ENCODE measurements at regions of chr11 and their contacts with region 1.

Region 1: GRCh38 chr11:4072668-4073285 is 21.8 kb upstream of the RRM1 start:
- DNase-seq: peak; percentile 62
- ATAC-seq: peak; percentile 75
- H3K4me3 Mint-ChIP-seq: no peak overlapping the region
- H3K27ac Mint-ChIP-seq: no peak overlapping the region
- H3K4me1 Mint-ChIP-seq: peaks cover 48% of the 10 kb centered on the region
- H3K27me3 Mint-ChIP-seq: no peaks in the 10 kb centered on the region

Region 2: GRCh38 chr11:3057069-3057963 is 1015.5 kb before region 1 on chr11 and contains the start of gene CARS1:
- CTCF ChIA-PET with region 1: no interaction called
- POLR2A ChIA-PET with region 1: no interaction called
- intact Hi-C with region 1: no loop called
- DNase-seq: peak; percentile 98
- ATAC-seq: peak; percentile 99
- H3K4me3 Mint-ChIP-seq: peak within 1 kb of the TSS; percentile 89
- H3K27ac Mint-ChIP-seq: peak within 1 kb of the TSS; percentile 87
- H3K4me1 Mint-ChIP-seq: peaks cover 29% of the 10 kb centered on the region
- H3K27me3 Mint-ChIP-seq: no peaks in the 10 kb centered on the region
- total RNA-seq, gene CARS1: 94.1 to 126 TPM

Region 3: GRCh38 chr11:3817181-3817800 is 255.5 kb before region 1 on chr11:
- CTCF ChIA-PET with region 1: interaction called, 17 read pairs
- POLR2A ChIA-PET with region 1: no interaction called
- intact Hi-C with region 1: no loop called
- DNase-seq: no peak
- ATAC-seq: no peak
- H3K4me3 Mint-ChIP-seq: no peak overlapping the region
- H3K27ac Mint-ChIP-seq: no peak overlapping the region
- H3K4me1 Mint-ChIP-seq: no peaks in the 10 kb centered on the region
- H3K27me3 Mint-ChIP-seq: no peaks in the 10 kb centered on the region

Region 4: DNA sequence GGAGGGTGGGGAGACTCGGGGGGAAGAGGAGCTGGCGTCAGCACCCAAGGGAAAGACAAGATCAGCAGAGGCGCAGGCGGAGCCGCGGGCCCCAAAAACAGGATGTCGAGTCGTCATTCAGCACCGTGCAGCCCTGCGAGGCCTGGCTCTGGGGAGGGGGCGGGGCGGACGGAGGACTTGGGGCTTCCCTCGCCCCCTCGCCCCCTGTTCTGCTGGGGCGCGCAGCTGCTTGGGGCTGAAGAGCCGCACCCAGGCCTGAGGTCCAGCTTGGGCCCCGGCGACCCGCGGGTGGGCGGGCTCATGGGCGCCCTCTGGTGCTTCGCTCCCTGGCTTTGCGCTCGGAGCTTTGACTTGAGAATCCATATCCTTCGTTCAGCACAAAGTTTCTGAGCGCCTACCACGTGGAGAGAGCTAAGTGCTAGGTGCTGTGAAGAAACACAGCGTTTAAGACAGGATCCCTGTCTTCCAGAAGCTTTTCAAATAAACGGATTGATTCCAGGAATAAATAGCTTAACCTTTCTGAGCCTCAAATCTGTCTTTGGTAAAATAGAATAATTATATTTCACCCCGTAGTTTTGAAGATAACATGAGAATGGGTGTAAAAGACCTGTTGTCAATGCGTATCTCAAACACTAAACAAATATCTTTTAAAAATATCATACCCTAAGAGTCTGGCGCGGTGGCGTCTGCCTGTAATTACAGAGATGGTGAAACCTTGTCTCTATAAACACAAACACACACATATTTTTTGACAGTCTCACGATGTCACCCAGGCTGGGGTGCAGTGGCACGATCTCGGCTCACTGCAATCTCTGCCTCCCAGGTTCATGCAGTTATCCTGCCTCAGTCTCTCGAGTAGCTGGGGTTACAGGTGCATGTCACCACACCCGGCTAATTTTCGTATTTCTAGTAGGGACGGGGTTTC is 231.1 kb before region 1 on chr11:
- CTCF ChIA-PET with region 1: interaction called, 299 read pairs
- POLR2A ChIA-PET with region 1: interaction called, 13 read pairs
- intact Hi-C with region 1: no loop called
- DNase-seq: peak; percentile 97
- ATAC-seq: peak; percentile 30
- H3K4me3 Mint-ChIP-seq: peak overlapping the region; percentile 93
- H3K27ac Mint-ChIP-seq: peak overlapping the region; percentile 93
- H3K4me1 Mint-ChIP-seq: peaks cover 54% of the 10 kb centered on the region
- H3K27me3 Mint-ChIP-seq: no peaks in the 10 kb centered on the region

Region 5: DNA sequence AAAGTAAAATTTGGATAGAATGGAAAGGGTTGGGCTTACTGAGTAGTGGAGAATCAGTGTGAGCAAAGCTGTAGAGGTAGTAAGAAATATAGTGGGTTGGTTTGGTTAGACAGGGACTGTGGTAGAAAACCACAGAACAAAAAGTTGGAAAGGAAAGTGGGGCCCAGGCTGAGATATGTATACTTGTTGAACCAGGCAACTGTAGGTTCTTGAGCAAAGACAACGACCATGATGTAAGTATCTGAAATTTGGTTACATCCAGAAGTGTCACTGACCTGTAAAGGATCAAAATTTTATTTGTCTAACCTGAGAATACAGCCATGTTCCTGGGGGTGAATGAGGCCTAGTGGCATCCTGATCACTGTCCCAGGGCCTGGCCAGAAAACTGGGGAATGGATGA is 103.2 kb before region 1 on chr11:
- CTCF ChIA-PET with region 1: interaction called, 11 read pairs
- POLR2A ChIA-PET with region 1: no interaction called
- intact Hi-C with region 1: no loop called
- DNase-seq: peak; percentile 59
- ATAC-seq: peak; percentile 77
- H3K4me3 Mint-ChIP-seq: peak overlapping the region; percentile 26
- H3K27ac Mint-ChIP-seq: peak overlapping the region; percentile 92
- H3K4me1 Mint-ChIP-seq: peaks cover 77% of the 10 kb centered on the region
- H3K27me3 Mint-ChIP-seq: no peaks in the 10 kb centered on the region

Region 6: DNA sequence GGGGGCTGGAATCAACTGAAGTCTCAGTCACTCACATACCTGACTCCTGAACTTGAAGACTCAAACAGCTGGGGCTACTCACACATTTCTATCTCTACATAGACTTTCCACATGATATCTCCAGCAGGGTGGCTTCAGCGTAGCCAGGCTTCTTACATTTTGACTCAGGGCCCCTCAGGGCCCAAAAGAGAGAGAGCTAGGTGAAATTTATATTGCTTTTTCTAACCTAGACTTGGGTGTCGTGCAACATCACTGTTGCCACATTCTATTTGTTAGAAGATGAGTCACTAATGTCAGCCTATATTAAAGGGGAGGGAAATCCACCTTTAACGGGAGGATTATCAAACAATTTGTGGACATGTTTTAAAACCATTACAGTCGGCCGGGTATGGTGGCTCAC is 50.1 kb before region 1 on chr11:
- CTCF ChIA-PET with region 1: interaction called, 10 read pairs
- POLR2A ChIA-PET with region 1: no interaction called
- intact Hi-C with region 1: no loop called
- DNase-seq: no peak
- ATAC-seq: no peak
- H3K4me3 Mint-ChIP-seq: no peak overlapping the region
- H3K27ac Mint-ChIP-seq: no peak overlapping the region
- H3K4me1 Mint-ChIP-seq: peaks cover 23% of the 10 kb centered on the region
- H3K27me3 Mint-ChIP-seq: no peaks in the 10 kb centered on the region

Region 7: DNA sequence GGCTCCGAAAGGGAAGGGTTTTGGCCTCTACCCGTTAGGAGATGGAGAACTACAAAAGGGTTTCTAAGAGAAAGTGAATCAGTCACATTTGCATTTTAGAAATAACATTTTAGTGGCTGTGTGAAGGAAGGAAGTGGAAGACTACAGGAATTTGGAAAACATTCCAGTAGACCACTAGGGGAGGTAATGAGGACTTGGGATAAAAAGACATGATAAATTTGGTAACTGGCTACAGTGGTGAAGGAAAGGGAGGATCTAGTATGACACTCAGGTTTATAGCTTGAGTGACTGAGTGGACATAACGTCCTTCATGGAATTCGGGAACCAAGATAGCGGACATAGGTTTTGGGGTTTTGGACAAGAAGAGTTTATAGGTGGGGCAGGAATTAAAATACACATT is 14.8 kb after region 1 on chr11:
- CTCF ChIA-PET with region 1: interaction called, 28 read pairs
- POLR2A ChIA-PET with region 1: no interaction called
- intact Hi-C with region 1: no loop called
- DNase-seq: no peak
- ATAC-seq: no peak
- H3K4me3 Mint-ChIP-seq: no peak overlapping the region
- H3K27ac Mint-ChIP-seq: peak overlapping the region; percentile 64
- H3K4me1 Mint-ChIP-seq: peaks cover 48% of the 10 kb centered on the region
- H3K27me3 Mint-ChIP-seq: no peaks in the 10 kb centered on the region

Region 8: DNA sequence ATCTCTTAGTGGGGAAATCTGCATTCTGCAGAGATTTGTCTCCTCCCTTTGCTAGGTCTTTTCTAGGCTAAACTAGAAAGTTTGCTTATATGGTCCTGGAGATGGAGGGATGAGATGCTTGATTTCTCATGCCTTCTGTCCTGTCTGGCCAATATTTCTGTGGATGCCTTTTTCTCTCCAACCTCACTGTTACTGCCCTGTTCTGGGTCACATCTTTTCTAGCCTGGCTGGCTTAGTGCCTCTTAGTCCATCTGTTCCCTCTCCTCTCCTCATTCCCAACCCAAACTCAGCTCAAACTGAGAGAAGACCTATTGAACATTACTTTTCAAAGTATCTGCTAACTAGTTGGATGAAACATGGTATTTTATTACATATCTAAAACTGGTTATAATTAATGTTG is 83.8 kb after region 1 on chr11:
- CTCF ChIA-PET with region 1: no interaction called
- POLR2A ChIA-PET with region 1: no interaction called
- intact Hi-C with region 1: no loop called
- DNase-seq: no peak
- ATAC-seq: no peak
- H3K4me3 Mint-ChIP-seq: no peak overlapping the region
- H3K27ac Mint-ChIP-seq: no peak overlapping the region
- H3K4me1 Mint-ChIP-seq: no peaks in the 10 kb centered on the region
- H3K27me3 Mint-ChIP-seq: no peaks in the 10 kb centered on the region